Heart left ventricle (tissue), 16 donors: ENCODE measurements at regions of chr2 and their contacts with region 1.

Region 1: GRCh38 chr2:37180006-37180639 is 8.3 kb downstream of the SULT6B1 start:
- DNase-seq: no peak
- ATAC-seq: no peak
- H3K4me3 ChIP-seq: no peak overlapping the region
- H3K27ac ChIP-seq: no peak overlapping the region
- H3K4me1 ChIP-seq: no peaks in the 10 kb centered on the region
- H3K27me3 ChIP-seq: peaks cover 0 to 4% (median 0%) of the 10 kb centered on the region in 9 donors
- CTCF ChIP-seq: no peak
- POLR2A ChIP-seq: no peak

Region 2: GRCh38 chr2:37125416-37125815 is 54.7 kb before region 1 on chr2:
- intact Hi-C with region 1: loop called in 1 of 10 experiments (anchors 2 kb)
- DNase-seq: no peak
- ATAC-seq: no peak
- H3K4me3 ChIP-seq: no peak overlapping the region
- H3K27ac ChIP-seq: no peak overlapping the region
- H3K4me1 ChIP-seq: no peaks in the 10 kb centered on the region
- H3K27me3 ChIP-seq: no peaks in the 10 kb centered on the region
- CTCF ChIP-seq: no peak
- POLR2A ChIP-seq: no peak

Region 3: DNA sequence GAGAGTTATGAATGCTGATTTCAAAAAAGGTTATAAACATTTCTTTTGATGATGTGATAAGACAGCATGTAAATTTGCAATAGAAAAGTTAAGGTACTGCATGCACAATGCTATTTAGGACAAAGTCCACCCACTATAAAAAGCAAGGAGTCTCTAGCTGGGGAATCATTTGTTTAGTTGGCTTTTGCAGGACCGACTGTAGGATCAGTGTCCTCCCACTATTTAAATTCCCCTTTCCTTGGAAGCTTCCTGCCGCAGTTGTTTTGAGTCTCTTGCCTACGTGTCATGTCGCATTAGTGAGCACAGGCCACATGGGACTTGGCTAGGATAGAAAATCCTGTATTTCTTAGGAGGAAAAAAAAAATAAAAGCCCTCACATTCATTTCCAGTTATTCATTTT is 177.4 kb after region 1 on chr2:
- intact Hi-C with region 1: no loop called
- DNase-seq: peak in 2 of 5 donors; percentile 30 to 38
- ATAC-seq: peak in 1 of 4 donors; percentile 42
- H3K4me3 ChIP-seq: no peak overlapping the region
- H3K27ac ChIP-seq: peak overlapping the region in 1 of 12 donors; percentile 20
- H3K4me1 ChIP-seq: peaks cover 0 to 9% (median 0%) of the 10 kb centered on the region in 12 donors
- H3K27me3 ChIP-seq: no peaks in the 10 kb centered on the region
- CTCF ChIP-seq: no peak
- POLR2A ChIP-seq: no peak